PC-3 (cell line): ENCODE measurements at regions of chr2 and their contacts with region 1.

Region 1: GRCh38 chr2:134469516-134470115 is 215.7 kb downstream of the MGAT5 start:
- DNase-seq: no peak
- ATAC-seq: no peak
- H3K4me3 ChIP-seq: no peak overlapping the region
- H3K27ac ChIP-seq: no peak overlapping the region
- H3K4me1 ChIP-seq: no peaks in the 10 kb centered on the region
- H3K27me3 ChIP-seq: no peaks in the 10 kb centered on the region
- CTCF ChIP-seq: no peak

Region 2: GRCh38 chr2:134498654-134499053 is 29.0 kb after region 1 on chr2:
- CTCF ChIA-PET with region 1: interaction called, 16 read pairs
- POLR2A ChIA-PET with region 1: no interaction called
- intact Hi-C with region 1: no loop called
- DNase-seq: no peak
- ATAC-seq: no peak
- H3K4me3 ChIP-seq: no peak overlapping the region
- H3K27ac ChIP-seq: no peak overlapping the region
- H3K4me1 ChIP-seq: no peaks in the 10 kb centered on the region
- H3K27me3 ChIP-seq: no peaks in the 10 kb centered on the region
- CTCF ChIP-seq: no peak

Region 3: GRCh38 chr2:134539981-134540380 is 70.4 kb after region 1 on chr2:
- CTCF ChIA-PET with region 1: no interaction called
- POLR2A ChIA-PET with region 1: no interaction called
- intact Hi-C with region 1: no loop called
- DNase-seq: no peak
- ATAC-seq: no peak
- H3K4me3 ChIP-seq: no peak overlapping the region
- H3K27ac ChIP-seq: no peak overlapping the region
- H3K4me1 ChIP-seq: no peaks in the 10 kb centered on the region
- H3K27me3 ChIP-seq: no peaks in the 10 kb centered on the region
- CTCF ChIP-seq: no peak

Region 4: DNA sequence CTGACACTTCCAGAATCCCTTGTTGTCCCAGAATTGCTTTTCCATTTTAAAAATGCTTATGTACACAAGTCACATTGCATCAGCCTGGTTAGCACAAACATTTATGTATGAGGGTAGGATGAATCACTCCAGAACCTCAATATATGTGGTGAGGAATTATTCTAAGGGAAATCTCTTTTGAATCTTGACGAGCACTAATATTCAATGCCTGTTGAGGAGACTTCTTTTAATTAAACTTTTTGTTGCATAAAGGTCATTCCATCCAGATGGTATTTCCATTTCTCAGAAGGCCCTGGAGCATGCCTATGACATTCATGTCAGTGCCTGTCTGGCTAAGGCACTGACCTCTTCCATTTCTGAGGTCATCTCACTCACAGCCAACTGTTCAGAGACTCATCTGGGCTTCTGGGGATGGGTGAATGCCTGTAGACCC is 396.9 kb after region 1 on chr2:
- CTCF ChIA-PET with region 1: no interaction called
- POLR2A ChIA-PET with region 1: no interaction called
- intact Hi-C with region 1: no loop called
- DNase-seq: peak; percentile 83
- ATAC-seq: peak; percentile 95
- H3K4me3 ChIP-seq: no peak overlapping the region
- H3K27ac ChIP-seq: peak overlapping the region; percentile 51
- H3K4me1 ChIP-seq: peaks cover 17% of the 10 kb centered on the region
- H3K27me3 ChIP-seq: no peaks in the 10 kb centered on the region
- CTCF ChIP-seq: no peak